Activated B cell treated with CpG ODN at 0.5 μM for 24 hours (primary cell): ENCODE measurements at regions of chr17 and their contacts with region 1.

Region 1: DNA sequence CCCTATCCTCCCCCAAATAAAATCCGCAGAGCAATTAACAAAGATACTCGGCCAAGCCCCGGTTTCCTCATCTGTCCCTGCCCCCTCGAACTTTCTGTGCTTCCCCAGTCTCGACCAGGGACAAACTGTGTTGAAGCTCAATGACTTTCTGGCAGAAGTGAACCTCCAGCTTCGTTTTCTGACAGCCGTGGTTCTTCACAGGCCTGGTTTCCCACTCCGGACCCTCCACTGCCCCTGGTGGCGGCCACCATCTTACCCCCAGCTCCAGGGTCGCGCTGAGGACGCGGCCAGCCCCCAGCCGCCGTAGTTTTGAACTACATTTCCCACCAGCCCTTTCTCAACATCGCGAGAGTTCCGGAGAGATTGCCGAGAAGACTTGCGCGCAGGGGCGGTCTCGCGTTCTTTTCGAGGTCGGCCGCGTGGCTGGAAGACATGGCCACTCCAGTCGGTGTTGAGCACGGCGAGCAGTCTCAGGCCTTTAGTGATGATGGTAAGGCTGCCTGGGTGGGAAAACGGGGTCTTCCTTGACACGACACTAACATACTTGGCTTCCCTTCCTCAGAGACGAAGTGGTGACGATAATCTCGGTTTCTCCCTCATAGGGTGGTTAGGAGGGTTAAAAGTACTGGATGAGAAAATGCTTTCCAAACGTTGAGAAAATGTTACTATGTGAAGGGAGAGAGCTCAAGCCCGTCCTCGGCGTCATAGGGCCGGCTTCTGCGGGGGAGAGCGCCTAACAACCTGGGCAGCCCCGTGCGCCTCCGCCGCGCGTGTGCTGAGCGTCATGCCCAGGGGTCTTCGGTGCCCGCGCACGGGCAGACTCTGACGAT is 17.7 kb downstream of the PRCD start:
- DNase-seq: peak; percentile 87
- ATAC-seq: peak; percentile 90
- H3K4me3 Mint-ChIP-seq: peak overlapping the region; percentile 95
- H3K27ac Mint-ChIP-seq: peak overlapping the region; percentile 98
- H3K4me1 Mint-ChIP-seq: peaks cover 68% of the 10 kb centered on the region
- H3K27me3 Mint-ChIP-seq: no peaks in the 10 kb centered on the region
- CTCF ChIP-seq: no peak

Region 2: GRCh38 chr17:76523084-76524037 is 34.2 kb before region 1 on chr17:
- CTCF ChIA-PET with region 1: interaction called, 11 read pairs
- POLR2A ChIA-PET with region 1: interaction called, 85 read pairs
- intact Hi-C with region 1: loop called (anchors 1 kb)
- DNase-seq: peak; percentile 82
- ATAC-seq: peak; percentile 45
- H3K4me3 Mint-ChIP-seq: peak overlapping the region; percentile 44
- H3K27ac Mint-ChIP-seq: peak overlapping the region; percentile 41
- H3K4me1 Mint-ChIP-seq: peaks cover 29% of the 10 kb centered on the region
- H3K27me3 Mint-ChIP-seq: peaks cover 3% of the 10 kb centered on the region
- CTCF ChIP-seq: peak; percentile 91

Region 3: DNA sequence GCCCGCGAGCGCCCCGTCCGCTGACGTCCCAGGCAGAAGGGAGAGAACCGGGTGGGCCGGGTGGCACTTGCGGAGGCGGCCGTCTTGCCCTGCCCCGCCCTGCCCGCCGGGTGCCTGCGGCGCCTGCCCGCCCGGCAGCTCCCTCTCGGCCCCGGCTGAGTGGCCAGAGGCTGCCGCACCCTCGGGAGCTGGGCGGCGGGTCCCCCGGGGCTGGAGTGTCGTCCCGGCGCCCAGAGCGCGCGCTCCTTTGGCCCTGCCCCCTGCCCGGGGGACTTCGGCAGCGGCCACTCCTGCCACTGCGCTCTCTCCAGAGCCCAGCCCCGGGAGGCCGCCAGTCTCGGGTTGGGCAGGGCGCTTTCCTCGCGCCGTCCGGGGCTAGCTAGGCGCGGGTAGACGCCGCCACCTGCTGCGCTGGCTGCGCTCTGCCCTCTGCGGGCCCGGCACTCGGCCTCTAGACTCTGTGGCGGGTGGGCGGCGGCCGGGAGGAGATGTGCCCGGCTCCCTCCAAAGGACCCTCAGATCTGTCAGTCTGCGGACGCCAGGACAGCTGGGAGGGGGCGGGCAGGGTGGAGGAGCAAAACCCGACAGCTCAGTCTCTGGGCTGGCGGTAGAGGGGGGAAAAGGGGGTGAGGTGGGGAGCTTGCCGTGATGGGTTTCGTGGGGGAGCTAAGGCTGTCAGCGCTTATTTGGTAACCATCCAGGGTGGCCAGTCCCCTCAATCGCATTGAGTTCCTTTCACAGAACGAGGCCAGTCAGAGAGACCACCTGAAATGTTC is 28.4 kb after region 1 on chr17 and contains the start of gene ST6GALNAC2:
- CTCF ChIA-PET with region 1: interaction called, 3 read pairs
- POLR2A ChIA-PET with region 1: interaction called, 18 read pairs
- intact Hi-C with region 1: no loop called
- DNase-seq: peak; percentile 52
- ATAC-seq: peak; percentile 75
- H3K4me3 Mint-ChIP-seq: peak within 1 kb of the TSS; percentile 75
- H3K27ac Mint-ChIP-seq: no peak within 1 kb of the TSS
- H3K4me1 Mint-ChIP-seq: peaks cover 18% of the 10 kb centered on the region
- H3K27me3 Mint-ChIP-seq: peaks cover 39% of the 10 kb centered on the region
- CTCF ChIP-seq: no peak
- total RNA-seq, gene ST6GALNAC2: not detected in 2 replicates

Region 4: DNA sequence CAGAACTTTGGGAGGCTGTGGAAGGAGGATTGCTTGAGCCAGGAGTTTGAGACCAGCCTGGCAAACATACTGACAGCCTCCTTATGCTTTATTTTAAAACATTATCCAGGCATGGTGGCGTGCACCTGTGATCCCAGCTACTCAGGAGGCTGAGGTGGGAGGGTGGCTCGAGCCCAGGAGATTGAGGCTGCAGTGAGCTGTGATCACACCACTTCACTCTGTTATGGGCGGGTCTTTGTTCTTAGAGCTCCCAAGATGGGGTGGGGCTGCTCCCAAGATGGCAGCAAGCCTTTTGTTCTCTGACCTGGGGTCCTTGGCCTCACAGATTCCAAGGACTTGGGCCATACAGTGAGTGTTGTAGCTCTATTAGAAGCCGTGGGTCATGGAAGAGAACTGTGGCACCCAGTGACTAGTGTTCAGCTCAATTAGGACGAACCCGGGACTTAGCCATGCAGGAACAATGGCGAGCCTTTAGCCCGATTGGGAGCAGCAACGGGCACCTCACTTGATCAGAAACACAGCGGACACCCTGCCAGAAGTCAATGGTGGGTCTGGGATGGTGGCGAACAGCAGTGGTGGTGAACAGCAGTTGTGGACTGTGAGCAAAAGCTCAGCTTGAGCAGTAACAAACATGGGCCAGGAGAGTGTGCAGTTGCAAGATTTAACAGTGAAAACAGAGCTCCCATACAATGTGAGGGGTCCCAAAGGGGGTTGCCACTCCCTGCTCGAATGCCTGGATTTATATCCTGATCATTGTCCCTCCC is 54.3 kb after region 1 on chr17:
- CTCF ChIA-PET with region 1: no interaction called
- POLR2A ChIA-PET with region 1: no interaction called
- intact Hi-C with region 1: no loop called
- DNase-seq: no peak
- ATAC-seq: no peak
- H3K4me3 Mint-ChIP-seq: no peak overlapping the region
- H3K27ac Mint-ChIP-seq: no peak overlapping the region
- H3K4me1 Mint-ChIP-seq: peaks cover 4% of the 10 kb centered on the region
- H3K27me3 Mint-ChIP-seq: peaks cover 8% of the 10 kb centered on the region
- CTCF ChIP-seq: no peak

Region 5: DNA sequence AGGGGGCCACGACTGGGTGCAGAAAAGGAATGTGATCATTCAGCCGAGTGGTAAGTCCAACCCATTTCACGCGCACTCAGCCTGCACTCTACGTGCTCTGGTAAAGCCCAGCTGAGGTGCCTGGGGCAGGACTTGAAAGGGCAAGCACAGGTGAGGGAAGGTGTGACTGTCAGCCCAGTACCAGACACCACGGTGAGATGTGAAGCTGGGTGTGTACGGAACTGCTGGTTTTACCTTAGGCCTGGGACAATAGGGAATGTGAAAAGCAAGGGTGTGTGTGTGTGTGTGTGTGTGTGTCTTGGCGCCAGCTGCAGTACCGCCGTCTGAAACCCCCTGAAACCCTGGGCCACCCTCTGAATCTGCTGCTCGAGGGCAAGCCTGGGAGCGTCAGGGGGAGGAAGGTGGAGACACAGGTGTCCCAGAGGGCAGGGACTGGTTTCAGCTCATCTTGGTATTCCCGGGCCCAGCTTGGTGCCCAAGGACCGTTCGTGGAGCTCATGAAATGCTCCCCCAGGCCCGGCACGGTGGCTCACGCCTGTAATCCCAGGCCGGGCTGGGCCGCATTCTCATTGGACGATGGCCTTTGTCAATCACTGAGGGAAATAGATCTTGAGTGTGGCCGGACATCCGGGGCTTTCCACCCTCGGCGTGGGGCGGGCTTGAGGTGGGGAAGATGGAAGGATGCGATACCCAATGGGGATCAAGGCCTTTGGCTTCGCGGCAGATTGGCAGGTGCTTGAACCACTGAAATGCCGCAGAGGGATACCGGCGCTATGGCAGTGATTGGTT is 113.7 kb after region 1 on chr17:
- CTCF ChIA-PET with region 1: no interaction called
- POLR2A ChIA-PET with region 1: interaction called, 9 read pairs
- intact Hi-C with region 1: loop called (anchors 1 kb)
- DNase-seq: peak; percentile 91
- ATAC-seq: peak; percentile 99
- H3K4me3 Mint-ChIP-seq: peak overlapping the region; percentile 91
- H3K27ac Mint-ChIP-seq: peak overlapping the region; percentile 90
- H3K4me1 Mint-ChIP-seq: peaks cover 22% of the 10 kb centered on the region
- H3K27me3 Mint-ChIP-seq: peaks cover 10% of the 10 kb centered on the region
- CTCF ChIP-seq: no peak